ENCODE measurements at regions of chr19 and their contacts with region 1.

Region 1: GRCh38 chr19:35509861-35510625 is 3.4 kb downstream of the DMKN start:
- DNase-seq: peak in 1 of 2 donors; percentile 88
- H3K4me3 ChIP-seq: peak overlapping the region; percentile 49 to 67
- H3K27ac ChIP-seq: peak overlapping the region; percentile 46 to 59
- H3K4me1 ChIP-seq: no peaks in the 10 kb centered on the region
- H3K27me3 ChIP-seq: no peaks in the 10 kb centered on the region
- CTCF ChIP-seq: peak; percentile 82 to 96 (median 84)

Region 2: GRCh38 chr19:35066691-35067563 is 443.1 kb before region 1 on chr19:
- intact Hi-C with region 1: loop called (anchors 10 kb)
- DNase-seq: peak; percentile 39 to 88
- H3K4me3 ChIP-seq: no peak overlapping the region
- H3K27ac ChIP-seq: no peak overlapping the region
- H3K4me1 ChIP-seq: no peaks in the 10 kb centered on the region
- H3K27me3 ChIP-seq: no peaks in the 10 kb centered on the region
- CTCF ChIP-seq: peak; percentile 75 to 84 (median 80)